Activated B cell treated with CpG ODN at 0.5 μM for 24 hours (primary cell): ENCODE measurements at regions of chr4 and their contacts with region 1.

Region 1: GRCh38 chr4:73620115-73620792 is at the start of gene RASSF6:
- DNase-seq: no peak
- ATAC-seq: peak; percentile 84
- H3K4me3 Mint-ChIP-seq: peak within 1 kb of the TSS; percentile 83
- H3K27ac Mint-ChIP-seq: no peak within 1 kb of the TSS
- H3K4me1 Mint-ChIP-seq: peaks cover 25% of the 10 kb centered on the region
- H3K27me3 Mint-ChIP-seq: peaks cover 6% of the 10 kb centered on the region
- CTCF ChIP-seq: no peak
- total RNA-seq, gene RASSF6: 4.0 TPM in 2 replicates

Region 2: DNA sequence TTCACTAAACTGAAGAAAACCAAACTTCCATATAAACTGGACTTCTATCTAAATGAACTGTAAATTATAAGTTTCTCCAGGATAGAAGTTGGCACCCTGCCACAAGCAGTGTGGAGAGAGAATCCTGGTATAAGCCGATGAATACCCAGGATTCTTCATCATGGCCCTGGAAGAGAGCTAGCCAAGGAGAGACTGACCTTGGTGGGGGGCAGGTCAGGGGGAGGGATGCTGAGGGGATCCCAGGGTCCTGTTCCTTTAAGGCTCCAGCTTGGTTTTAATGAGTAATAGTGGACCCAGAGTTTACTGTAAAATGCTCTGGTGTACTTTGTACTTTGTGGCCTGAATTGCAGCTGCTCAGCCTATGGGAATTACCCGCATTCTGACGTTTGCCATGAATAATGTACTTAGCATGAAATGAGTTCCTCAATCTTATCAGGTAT is 17.0 kb before region 1 on chr4:
- CTCF ChIA-PET with region 1: interaction called, 3 read pairs
- POLR2A ChIA-PET with region 1: interaction called, 8 read pairs
- intact Hi-C with region 1: loop called (anchors 1 kb)
- DNase-seq: no peak
- ATAC-seq: peak; percentile 59
- H3K4me3 Mint-ChIP-seq: peak overlapping the region; percentile 21
- H3K27ac Mint-ChIP-seq: peak overlapping the region; percentile 25
- H3K4me1 Mint-ChIP-seq: peaks cover 47% of the 10 kb centered on the region
- H3K27me3 Mint-ChIP-seq: no peaks in the 10 kb centered on the region
- CTCF ChIP-seq: no peak

Region 3: GRCh38 chr4:73945674-73946449 is 325.6 kb after region 1 on chr4:
- CTCF ChIA-PET with region 1: no interaction called
- POLR2A ChIA-PET with region 1: no interaction called
- intact Hi-C with region 1: no loop called
- DNase-seq: no peak
- ATAC-seq: no peak
- H3K4me3 Mint-ChIP-seq: no peak overlapping the region
- H3K27ac Mint-ChIP-seq: no peak overlapping the region
- H3K4me1 Mint-ChIP-seq: no peaks in the 10 kb centered on the region
- H3K27me3 Mint-ChIP-seq: peaks cover 24% of the 10 kb centered on the region
- CTCF ChIP-seq: no peak